Ascending aorta (tissue), 2 donors: ENCODE measurements at regions of chr11 and their contacts with region 1.

Region 1: DNA sequence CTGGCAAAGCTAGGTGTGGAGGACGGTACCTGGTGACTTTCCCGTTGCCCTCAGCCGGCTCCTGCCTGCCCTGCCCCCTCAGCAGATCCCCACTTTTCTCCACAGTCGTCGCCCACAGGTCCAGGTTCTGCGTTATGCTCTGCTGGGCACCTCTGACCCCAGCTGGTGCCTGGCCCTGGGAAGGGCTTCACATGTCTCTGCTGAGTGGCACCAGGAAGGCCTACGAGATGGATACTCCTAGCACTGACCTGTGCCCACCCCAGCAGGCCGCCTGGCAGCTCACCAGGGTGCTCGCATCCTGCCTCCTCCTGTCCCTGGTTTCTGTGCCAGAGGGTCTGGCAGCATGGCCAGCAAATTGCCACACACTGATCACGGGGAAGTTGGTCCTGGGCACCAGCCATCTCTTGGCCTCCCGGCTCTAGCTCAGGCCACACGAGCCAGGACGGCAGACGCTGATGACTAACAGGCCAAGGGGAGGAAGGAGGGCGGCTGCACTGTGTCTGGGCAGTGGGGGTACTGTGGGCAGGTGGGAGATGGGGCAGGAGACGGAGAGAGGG is 13.8 kb downstream of the CARS1 start:
- DNase-seq: peak; percentile 76 to 95
- H3K4me3 ChIP-seq: no peak overlapping the region
- H3K27ac ChIP-seq: peak overlapping the region; percentile 85 to 87
- H3K4me1 ChIP-seq: peaks cover 4 to 20% of the 10 kb centered on the region in 2 donors
- H3K27me3 ChIP-seq: no peaks in the 10 kb centered on the region
- CTCF ChIP-seq: no peak

Region 2: DNA sequence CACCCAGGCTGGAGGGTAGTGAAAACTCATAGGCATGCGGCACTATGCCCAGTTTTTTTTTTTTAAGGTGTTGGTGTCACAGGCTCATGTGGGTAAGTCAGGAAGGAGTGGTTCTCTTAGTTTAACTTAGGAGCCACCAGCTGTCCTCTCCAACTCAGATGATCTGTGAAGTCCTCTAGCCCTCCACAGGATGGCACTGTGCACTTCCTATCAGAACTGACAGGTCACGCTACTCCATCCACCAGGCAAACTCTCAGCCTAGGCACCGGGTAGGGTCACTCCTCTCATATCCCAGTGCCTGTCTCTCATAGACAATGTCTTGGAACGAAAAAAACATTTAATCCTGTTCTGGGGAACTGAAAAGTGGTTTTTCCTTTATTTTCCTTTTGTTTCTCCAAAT is 67.8 kb before region 1 on chr11:
- intact Hi-C with region 1: no loop called
- DNase-seq: no peak
- H3K4me3 ChIP-seq: no peak overlapping the region
- H3K27ac ChIP-seq: no peak overlapping the region
- H3K4me1 ChIP-seq: no peaks in the 10 kb centered on the region
- H3K27me3 ChIP-seq: no peaks in the 10 kb centered on the region
- CTCF ChIP-seq: peak in 2 of 3 experiments; percentile 12 to 17

Region 3: GRCh38 chr11:2992234-2992996 is 51.0 kb before region 1 on chr11 and contains the start of gene NAP1L4:
- intact Hi-C with region 1: loop called (anchors 5 kb)
- DNase-seq: peak; percentile 85 to 97
- H3K4me3 ChIP-seq: peak within 1 kb of the TSS; percentile 74 to 80
- H3K27ac ChIP-seq: peak within 1 kb of the TSS; percentile 71 to 90
- H3K4me1 ChIP-seq: peaks cover 6 to 27% of the 10 kb centered on the region in 2 donors
- H3K27me3 ChIP-seq: no peaks in the 10 kb centered on the region
- CTCF ChIP-seq: no peak
- total RNA-seq, gene NAP1L4: 54.5 TPM

Region 4: GRCh38 chr11:3057069-3057963 is 13.9 kb after region 1 on chr11 and contains the start of gene CARS1:
- intact Hi-C with region 1: loop called (anchors 2 kb)
- DNase-seq: peak; percentile 87 to 99
- H3K4me3 ChIP-seq: peak within 1 kb of the TSS; percentile 80 to 88
- H3K27ac ChIP-seq: peak within 1 kb of the TSS; percentile 71 to 81
- H3K4me1 ChIP-seq: peaks cover 0 to 11% of the 10 kb centered on the region in 2 donors
- H3K27me3 ChIP-seq: no peaks in the 10 kb centered on the region
- CTCF ChIP-seq: no peak
- total RNA-seq, gene CARS1: 51.4 TPM

Region 5: GRCh38 chr11:3378426-3379423 is 335.3 kb after region 1 on chr11 and contains the start of gene ZNF195:
- intact Hi-C with region 1: loop called (anchors 2 kb)
- DNase-seq: peak; percentile 98 to 100
- H3K4me3 ChIP-seq: peak within 1 kb of the TSS; percentile 79 to 95
- H3K27ac ChIP-seq: peak within 1 kb of the TSS; percentile 73 to 78
- H3K4me1 ChIP-seq: peaks cover 3 to 9% of the 10 kb centered on the region in 2 donors
- H3K27me3 ChIP-seq: no peaks in the 10 kb centered on the region
- CTCF ChIP-seq: no peak
- total RNA-seq, gene ZNF195: 1.3 TPM

Region 6: DNA sequence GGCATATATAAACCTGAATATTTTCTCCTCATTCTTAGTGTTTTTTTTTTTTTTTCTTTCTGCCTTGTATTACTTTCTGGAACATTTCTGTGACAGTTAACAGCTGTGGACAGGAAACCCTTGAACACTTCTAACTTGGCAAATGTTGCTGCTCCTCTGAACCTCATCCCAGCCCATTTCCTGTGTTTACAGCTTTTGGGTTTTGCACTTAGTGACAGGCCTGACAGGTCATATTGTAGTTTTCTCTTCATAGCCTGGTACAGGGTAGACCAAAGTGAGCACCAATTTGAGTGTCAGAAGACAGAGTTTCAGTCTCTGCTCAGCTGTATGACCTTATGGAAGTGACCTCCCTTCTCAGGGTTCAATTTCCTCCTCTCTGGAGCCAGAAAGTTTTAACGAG is 903.7 kb after region 1 on chr11:
- intact Hi-C with region 1: no loop called
- DNase-seq: peak in 1 of 2 donors; percentile 67
- H3K4me3 ChIP-seq: no peak overlapping the region
- H3K27ac ChIP-seq: peak overlapping the region; percentile 85 to 88
- H3K4me1 ChIP-seq: peaks cover 51 to 79% of the 10 kb centered on the region in 2 donors
- H3K27me3 ChIP-seq: no peaks in the 10 kb centered on the region
- CTCF ChIP-seq: no peak